Aorta (tissue), 5 donors: ENCODE measurements at regions of chr18 and their contacts with region 1.

Region 1: DNA sequence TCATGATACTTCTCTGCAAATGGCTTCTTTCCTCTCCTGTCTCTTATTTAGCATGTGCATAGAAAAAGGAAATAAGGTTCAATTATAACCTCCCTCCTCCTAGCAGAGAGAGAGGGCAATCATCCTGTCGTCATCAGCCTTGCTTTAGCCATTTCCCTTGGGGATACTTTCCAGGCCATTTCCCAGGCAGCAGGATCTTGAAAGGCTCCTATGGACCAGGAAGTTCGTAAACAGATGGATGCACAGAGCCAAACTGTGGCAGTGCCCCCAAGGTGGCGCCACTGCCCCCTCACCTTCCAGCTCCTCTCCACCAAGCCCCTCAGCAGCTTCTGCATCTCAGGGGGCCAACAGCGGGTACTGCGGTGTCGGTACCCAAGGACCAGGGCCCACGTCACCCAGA is 157.4 kb downstream of the DTNA start:
- DNase-seq: no peak
- ATAC-seq: peak; percentile 52
- H3K4me3 ChIP-seq: no peak overlapping the region
- H3K27ac ChIP-seq: peak overlapping the region in 1 of 2 donors; percentile 85
- H3K4me1 ChIP-seq: no peaks in the 10 kb centered on the region
- H3K27me3 ChIP-seq: no peaks in the 10 kb centered on the region

Region 2: DNA sequence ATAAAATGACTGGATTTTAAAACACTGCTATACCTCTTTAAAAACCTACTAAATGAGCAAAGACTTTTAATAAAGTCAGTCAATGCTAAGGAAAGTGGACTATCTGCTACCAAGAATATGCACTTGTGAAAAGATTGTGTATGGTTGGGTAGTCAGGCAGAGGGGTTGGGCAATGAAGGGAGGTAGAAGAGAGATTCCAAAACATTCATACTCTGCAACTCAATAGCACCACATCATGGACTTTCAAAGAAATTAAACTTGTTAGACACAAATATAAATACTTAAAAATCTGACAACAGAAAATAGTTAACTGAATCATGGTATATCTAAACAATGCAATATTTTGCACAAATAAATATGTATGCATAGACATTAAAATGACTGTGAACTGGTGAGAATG is 33.8 kb after region 1 on chr18:
- intact Hi-C with region 1: loop called (anchors 1 to 5 kb)
- DNase-seq: no peak
- ATAC-seq: no peak
- H3K4me3 ChIP-seq: no peak overlapping the region
- H3K27ac ChIP-seq: no peak overlapping the region
- H3K4me1 ChIP-seq: no peaks in the 10 kb centered on the region
- H3K27me3 ChIP-seq: no peaks in the 10 kb centered on the region

Region 3: GRCh38 chr18:35143622-35144596 is 276.4 kb after region 1 on chr18:
- intact Hi-C with region 1: loop called in 1 of 2 experiments (anchors 10 kb)
- DNase-seq: peak in 1 of 2 donors; percentile 62
- ATAC-seq: peak; percentile 89
- H3K4me3 ChIP-seq: no peak overlapping the region
- H3K27ac ChIP-seq: no peak overlapping the region
- H3K4me1 ChIP-seq: peaks cover 2% of the 10 kb centered on the region in 2 donors
- H3K27me3 ChIP-seq: no peaks in the 10 kb centered on the region